Naive thymus-derived CD4-positive, alpha-beta T cell (primary cell): ENCODE measurements at regions of chr1 and their contacts with region 1.

Region 1: GRCh38 chr1:161192476-161193465 is 6.1 kb downstream of the ADAMTS4 start:
- DNase-seq: peak in 8 of 9 donors; percentile 53 to 80 (median 74)
- ATAC-seq: peak; percentile 95
- H3K4me3 ChIP-seq: no peak overlapping the region
- H3K4me3 Mint-ChIP-seq: peak overlapping the region in 5 of 10 donors; percentile 18 to 50 (median 29)
- H3K27ac ChIP-seq: no peak overlapping the region
- H3K27ac Mint-ChIP-seq: peak overlapping the region; percentile 51 to 93 (median 85)
- H3K4me1 ChIP-seq: peaks cover 34 to 53% of the 10 kb centered on the region in 2 donors
- H3K4me1 Mint-ChIP-seq: peaks cover 30 to 68% (median 42%) of the 10 kb centered on the region in 7 donors
- H3K27me3 ChIP-seq: no peaks in the 10 kb centered on the region
- H3K27me3 Mint-ChIP-seq: no peaks in the 10 kb centered on the region

Region 2: GRCh38 chr1:160483505-160484185 is 709.1 kb before region 1 on chr1:
- CTCF ChIA-PET with region 1: no interaction called
- POLR2A ChIA-PET with region 1: no interaction called
- intact Hi-C with region 1: no loop called
- DNase-seq: peak in 1 of 9 donors; percentile 13
- ATAC-seq: no peak
- H3K4me3 ChIP-seq: no peak overlapping the region
- H3K4me3 Mint-ChIP-seq: no peak overlapping the region
- H3K27ac ChIP-seq: no peak overlapping the region
- H3K27ac Mint-ChIP-seq: peak overlapping the region in 7 of 9 donors; percentile 15 to 68 (median 53)
- H3K4me1 ChIP-seq: peaks cover 10 to 18% of the 10 kb centered on the region in 2 donors
- H3K4me1 Mint-ChIP-seq: peaks cover 8 to 57% (median 48%) of the 10 kb centered on the region in 7 donors
- H3K27me3 ChIP-seq: no peaks in the 10 kb centered on the region
- H3K27me3 Mint-ChIP-seq: no peaks in the 10 kb centered on the region

Region 3: DNA sequence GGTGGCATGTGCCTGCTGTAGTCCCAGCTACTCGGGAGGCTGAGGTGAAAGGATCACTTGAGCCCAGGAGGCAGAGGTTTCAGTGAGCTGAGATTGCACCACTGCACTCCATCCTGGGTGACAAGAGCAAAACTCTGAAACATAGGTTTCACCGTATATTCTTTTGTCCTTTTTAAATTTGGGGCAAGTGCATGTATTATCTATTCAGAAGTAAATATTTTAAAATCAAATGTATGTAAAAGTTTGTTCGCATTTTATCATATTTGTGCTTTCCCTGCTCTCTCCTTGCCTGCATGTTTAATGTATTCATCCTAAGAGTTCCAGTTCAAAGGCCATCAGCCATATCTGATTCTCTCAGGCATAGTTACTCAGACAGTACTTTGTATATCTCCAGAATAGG is 46.9 kb before region 1 on chr1:
- CTCF ChIA-PET with region 1: no interaction called
- POLR2A ChIA-PET with region 1: no interaction called
- intact Hi-C with region 1: no loop called
- DNase-seq: no peak
- ATAC-seq: no peak
- H3K4me3 ChIP-seq: no peak overlapping the region
- H3K4me3 Mint-ChIP-seq: no peak overlapping the region
- H3K27ac ChIP-seq: no peak overlapping the region
- H3K27ac Mint-ChIP-seq: no peak overlapping the region
- H3K4me1 ChIP-seq: no peaks in the 10 kb centered on the region
- H3K4me1 Mint-ChIP-seq: no peaks in the 10 kb centered on the region
- H3K27me3 ChIP-seq: no peaks in the 10 kb centered on the region
- H3K27me3 Mint-ChIP-seq: no peaks in the 10 kb centered on the region

Region 4: DNA sequence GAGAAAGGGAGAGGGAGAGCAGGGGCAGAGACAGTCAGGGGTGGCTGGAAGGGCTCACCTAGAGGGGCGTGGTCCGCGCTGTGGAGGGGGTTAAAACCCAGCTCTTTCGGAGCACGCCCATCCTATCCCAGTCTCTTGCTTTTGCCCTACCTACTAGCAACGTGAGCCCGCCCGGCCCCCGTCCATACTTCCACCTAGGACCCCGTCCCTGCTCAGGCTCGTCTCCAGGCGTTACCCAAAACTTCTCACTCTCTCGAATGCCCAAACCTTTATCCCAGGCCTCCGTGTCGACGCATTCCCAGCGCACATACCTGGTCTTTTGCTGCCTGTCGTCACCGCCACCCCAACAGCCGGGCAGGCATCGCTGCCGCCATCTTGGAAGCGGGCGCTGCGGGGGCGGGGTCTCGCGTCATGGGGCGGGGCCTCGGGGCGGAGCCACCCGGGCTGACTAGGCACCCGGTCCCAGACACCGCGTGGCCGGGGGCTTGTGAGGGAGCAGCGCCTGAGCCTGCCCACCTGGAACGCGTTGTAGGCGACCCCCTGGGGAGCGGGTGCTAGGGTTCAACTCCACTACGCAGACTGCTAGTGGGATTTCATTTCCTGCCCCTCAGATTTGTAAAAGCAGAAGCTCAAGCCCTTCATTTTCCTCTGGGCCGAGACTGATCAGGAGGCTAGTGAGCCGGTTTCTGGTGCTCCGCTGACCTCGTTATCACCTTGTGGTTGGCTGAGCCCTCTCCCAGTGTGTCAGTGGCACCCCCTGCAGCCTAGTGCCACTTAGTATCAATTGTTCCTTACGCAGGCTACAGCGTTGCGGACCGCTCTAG is 15.4 kb before region 1 on chr1 and contains the start of gene B4GALT3:
- CTCF ChIA-PET with region 1: interaction called, 76 read pairs
- POLR2A ChIA-PET with region 1: interaction called, 93 read pairs
- intact Hi-C with region 1: loop called (anchors 1 kb)
- DNase-seq: peak; percentile 87 to 99 (median 92)
- ATAC-seq: peak; percentile 96
- H3K4me3 ChIP-seq: peak within 1 kb of the TSS; percentile 93
- H3K4me3 Mint-ChIP-seq: peak within 1 kb of the TSS; percentile 94 to 100 (median 98)
- H3K27ac ChIP-seq: peak within 1 kb of the TSS; percentile 93
- H3K27ac Mint-ChIP-seq: peak within 1 kb of the TSS; percentile 94 to 100 (median 97)
- H3K4me1 ChIP-seq: peaks cover 36 to 39% of the 10 kb centered on the region in 2 donors
- H3K4me1 Mint-ChIP-seq: peaks cover 54 to 87% (median 74%) of the 10 kb centered on the region in 7 donors
- H3K27me3 ChIP-seq: no peaks in the 10 kb centered on the region
- H3K27me3 Mint-ChIP-seq: no peaks in the 10 kb centered on the region
- total RNA-seq, gene B4GALT3: 40.5 to 83.7 (median 54.3) TPM

Region 5: DNA sequence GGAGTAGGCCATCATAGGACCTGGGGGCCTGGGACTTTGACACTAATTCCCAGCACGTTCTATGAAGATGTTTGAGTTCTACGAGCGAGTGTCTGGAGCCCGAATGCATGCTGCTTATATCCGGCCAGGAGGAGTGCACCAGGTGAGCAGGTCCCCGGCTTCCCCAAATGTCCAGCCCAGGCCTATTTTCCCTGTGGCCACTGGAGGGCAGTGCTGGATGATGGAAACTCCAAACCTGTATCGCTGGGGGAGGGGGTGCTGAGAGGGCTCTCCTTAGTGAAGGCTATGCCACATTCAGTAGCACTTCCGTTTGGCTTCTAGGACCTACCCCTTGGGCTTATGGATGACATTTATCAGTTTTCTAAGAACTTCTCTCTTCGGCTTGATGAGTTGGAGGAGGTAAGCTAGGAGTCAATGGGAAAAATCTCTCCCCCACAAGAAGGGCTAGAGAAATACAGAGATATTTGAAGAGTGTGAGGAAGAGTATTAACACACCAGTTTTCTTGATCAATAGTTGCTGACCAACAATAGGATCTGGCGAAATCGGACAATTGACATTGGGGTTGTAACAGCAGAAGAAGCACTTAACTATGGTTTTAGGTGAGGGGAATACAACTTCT is 17.1 kb after region 1 on chr1:
- CTCF ChIA-PET with region 1: interaction called, 21 read pairs
- POLR2A ChIA-PET with region 1: interaction called, 508 read pairs
- intact Hi-C with region 1: loop called in 1 of 2 experiments (anchors 1 kb)
- DNase-seq: peak; percentile 53 to 79 (median 73)
- ATAC-seq: peak; percentile 98
- H3K4me3 ChIP-seq: no peak overlapping the region
- H3K4me3 Mint-ChIP-seq: no peak overlapping the region
- H3K27ac ChIP-seq: peak overlapping the region; percentile 27
- H3K27ac Mint-ChIP-seq: peak overlapping the region in 8 of 9 donors; percentile 60 to 89 (median 66)
- H3K4me1 ChIP-seq: peaks cover 0 to 31% of the 10 kb centered on the region in 2 donors
- H3K4me1 Mint-ChIP-seq: peaks cover 12 to 49% (median 41%) of the 10 kb centered on the region in 7 donors
- H3K27me3 ChIP-seq: no peaks in the 10 kb centered on the region
- H3K27me3 Mint-ChIP-seq: no peaks in the 10 kb centered on the region

Region 6: DNA sequence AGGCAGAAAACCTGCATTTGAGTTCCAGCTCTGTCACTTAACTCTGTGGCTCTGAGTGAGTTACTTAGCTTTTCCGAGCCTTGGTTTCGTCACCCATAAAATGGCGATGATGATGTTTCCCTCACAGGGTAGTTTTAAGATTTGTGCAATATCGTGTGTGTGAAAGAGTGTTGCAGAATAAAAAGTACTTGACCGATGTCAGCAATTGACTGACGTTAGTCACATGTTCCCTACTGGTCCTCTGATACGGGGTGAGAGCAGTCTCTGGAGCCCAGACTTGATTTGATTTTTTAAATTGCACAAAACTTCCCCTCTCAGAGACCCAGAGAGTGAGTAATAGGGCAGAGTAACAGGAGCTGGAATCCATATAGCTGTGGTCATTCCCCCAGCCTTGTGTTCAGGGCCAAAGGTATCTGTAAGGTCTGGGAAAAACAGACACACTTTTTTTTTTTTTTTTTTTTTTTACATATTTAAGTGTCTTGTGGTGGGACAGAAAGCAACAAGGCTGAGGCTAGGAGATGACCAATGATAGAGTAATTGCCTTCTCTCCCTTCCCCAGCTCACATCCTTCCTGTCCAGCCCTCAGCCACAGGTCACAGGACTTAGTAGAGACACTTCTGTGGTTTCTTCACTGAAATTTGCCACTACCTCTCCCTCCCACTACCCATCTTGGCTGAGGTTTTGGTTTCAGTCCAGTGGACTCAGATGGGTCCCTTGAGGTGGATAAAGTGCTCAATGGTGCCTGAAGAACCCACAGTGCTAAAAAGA is 24.4 kb after region 1 on chr1:
- CTCF ChIA-PET with region 1: interaction called, 19 read pairs
- POLR2A ChIA-PET with region 1: interaction called, 508 read pairs
- intact Hi-C with region 1: no loop called
- DNase-seq: no peak
- ATAC-seq: peak; percentile 82
- H3K4me3 ChIP-seq: no peak overlapping the region
- H3K4me3 Mint-ChIP-seq: peak overlapping the region in 7 of 10 donors; percentile 8 to 73 (median 67)
- H3K27ac ChIP-seq: peak overlapping the region; percentile 52
- H3K27ac Mint-ChIP-seq: peak overlapping the region; percentile 51 to 99 (median 91)
- H3K4me1 ChIP-seq: peaks cover 0 to 45% of the 10 kb centered on the region in 2 donors
- H3K4me1 Mint-ChIP-seq: peaks cover 31 to 64% (median 54%) of the 10 kb centered on the region in 7 donors
- H3K27me3 ChIP-seq: no peaks in the 10 kb centered on the region
- H3K27me3 Mint-ChIP-seq: no peaks in the 10 kb centered on the region

Region 7: DNA sequence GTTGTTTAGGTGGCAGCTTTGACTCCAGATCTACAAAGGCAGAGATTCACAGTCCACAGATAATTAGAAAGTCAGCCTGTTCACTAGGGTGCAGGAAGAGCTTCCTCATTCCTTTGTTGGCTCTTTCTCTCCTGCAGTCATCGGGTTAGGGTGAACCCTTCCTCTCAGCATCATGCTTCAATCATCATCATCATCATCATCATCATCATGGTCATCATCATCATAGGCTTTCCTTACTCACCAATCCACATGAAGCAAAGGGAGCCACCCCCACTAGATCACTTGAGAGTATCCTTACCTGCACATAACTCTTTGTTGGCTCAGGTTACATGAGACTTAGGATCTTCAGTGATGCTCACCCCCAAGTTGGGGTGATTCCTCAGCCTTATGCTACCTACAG is 98.0 kb after region 1 on chr1:
- CTCF ChIA-PET with region 1: interaction called, 10 read pairs
- POLR2A ChIA-PET with region 1: interaction called, 4 read pairs
- intact Hi-C with region 1: loop called (anchors 1 kb)
- DNase-seq: no peak
- ATAC-seq: no peak
- H3K4me3 ChIP-seq: no peak overlapping the region
- H3K4me3 Mint-ChIP-seq: no peak overlapping the region
- H3K27ac ChIP-seq: no peak overlapping the region
- H3K27ac Mint-ChIP-seq: peak overlapping the region in 2 of 9 donors; percentile 28 to 61
- H3K4me1 ChIP-seq: no peaks in the 10 kb centered on the region
- H3K4me1 Mint-ChIP-seq: peaks cover 0 to 6% (median 0%) of the 10 kb centered on the region in 7 donors
- H3K27me3 ChIP-seq: no peaks in the 10 kb centered on the region
- H3K27me3 Mint-ChIP-seq: no peaks in the 10 kb centered on the region

Region 8: DNA sequence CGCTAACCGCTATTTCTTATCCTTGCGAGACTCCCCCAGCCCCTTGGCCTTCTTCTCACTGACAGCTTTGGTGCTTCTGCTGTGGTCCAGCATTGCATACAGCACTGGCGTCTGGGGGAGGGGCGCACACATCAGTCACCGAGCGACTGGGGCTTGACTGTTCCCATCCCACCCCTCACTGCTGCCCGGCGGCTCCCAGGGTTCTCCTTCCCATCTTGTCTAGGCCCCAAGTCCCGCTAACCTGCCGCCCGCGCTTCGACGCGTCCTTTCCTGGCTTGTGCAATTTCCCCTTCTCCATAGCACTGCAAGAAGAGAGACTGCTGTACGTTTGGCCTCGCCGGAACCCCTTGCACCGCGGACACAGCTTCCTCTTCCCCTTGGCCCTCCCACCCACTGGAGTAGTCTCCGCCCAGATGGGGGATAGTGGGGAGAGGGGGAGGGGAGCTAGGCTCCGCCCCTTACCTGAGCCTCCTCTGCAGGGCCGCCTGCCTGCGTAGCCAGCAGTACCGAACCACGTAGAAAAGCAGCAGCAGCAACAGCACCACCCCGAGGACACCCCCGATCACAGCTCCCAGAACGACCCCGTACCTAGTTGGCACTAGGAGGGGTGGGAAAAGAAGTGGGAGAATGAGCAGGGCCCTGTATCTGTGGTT is 113.2 kb after region 1 on chr1:
- CTCF ChIA-PET with region 1: interaction called, 3 read pairs
- POLR2A ChIA-PET with region 1: interaction called, 5 read pairs
- intact Hi-C with region 1: loop called in 1 of 2 experiments (anchors 1 kb)
- DNase-seq: peak; percentile 67 to 94 (median 92)
- ATAC-seq: peak; percentile 99
- H3K4me3 ChIP-seq: peak overlapping the region; percentile 86
- H3K4me3 Mint-ChIP-seq: peak overlapping the region; percentile 93 to 100 (median 98)
- H3K27ac ChIP-seq: peak overlapping the region; percentile 78
- H3K27ac Mint-ChIP-seq: peak overlapping the region; percentile 91 to 98 (median 95)
- H3K4me1 ChIP-seq: peaks cover 16 to 19% of the 10 kb centered on the region in 2 donors
- H3K4me1 Mint-ChIP-seq: peaks cover 27 to 47% (median 41%) of the 10 kb centered on the region in 7 donors
- H3K27me3 ChIP-seq: no peaks in the 10 kb centered on the region
- H3K27me3 Mint-ChIP-seq: peaks cover 0 to 5% (median 0%) of the 10 kb centered on the region in 5 donors

Region 9: DNA sequence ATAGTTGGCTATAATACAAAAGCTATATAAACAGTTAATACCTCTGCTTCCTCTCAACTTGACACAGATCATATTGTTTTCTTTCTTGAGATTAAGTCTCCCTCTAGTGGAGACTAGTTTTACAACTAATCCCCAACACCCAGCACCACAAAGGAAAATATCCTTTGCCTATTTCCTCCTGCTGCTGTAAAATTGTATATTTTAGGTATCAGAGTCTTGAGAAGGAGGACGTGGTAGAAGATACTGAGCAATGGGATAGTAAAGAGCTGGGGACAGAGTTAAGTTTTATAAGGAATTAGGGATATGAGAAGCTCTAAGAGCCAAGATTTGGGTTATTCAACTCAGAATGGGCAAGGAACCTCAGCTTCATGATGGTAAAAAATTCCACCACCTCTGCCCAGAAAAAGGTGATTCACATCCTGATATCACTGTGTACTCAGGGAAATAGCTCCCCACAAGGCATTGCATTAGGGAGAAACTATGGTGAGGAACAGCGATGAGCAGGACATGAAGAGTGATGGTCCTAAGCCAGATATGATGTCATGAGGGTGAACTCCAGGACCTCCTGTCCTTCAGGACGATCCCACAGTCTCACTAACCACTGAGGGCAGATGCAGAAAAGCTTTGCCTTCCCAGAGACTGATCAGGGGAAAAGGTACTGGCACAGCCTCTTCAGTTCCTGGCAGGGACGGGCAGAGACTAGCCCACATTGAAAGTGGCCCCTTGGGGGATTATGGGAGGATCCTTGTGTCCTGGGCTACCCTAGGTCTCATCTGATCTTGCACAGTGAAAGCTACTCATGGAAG is 189.6 kb after region 1 on chr1:
- CTCF ChIA-PET with region 1: interaction called, 17 read pairs
- POLR2A ChIA-PET with region 1: no interaction called
- intact Hi-C with region 1: loop called (anchors 1 kb)
- DNase-seq: peak in 6 of 9 donors; percentile 40 to 68 (median 59)
- ATAC-seq: peak; percentile 91
- H3K4me3 ChIP-seq: no peak overlapping the region
- H3K4me3 Mint-ChIP-seq: no peak overlapping the region
- H3K27ac ChIP-seq: no peak overlapping the region
- H3K27ac Mint-ChIP-seq: peak overlapping the region in 3 of 9 donors; percentile 53 to 76 (median 73)
- H3K4me1 ChIP-seq: peaks cover 0 to 3% of the 10 kb centered on the region in 2 donors
- H3K4me1 Mint-ChIP-seq: peaks cover 0 to 19% (median 13%) of the 10 kb centered on the region in 7 donors
- H3K27me3 ChIP-seq: no peaks in the 10 kb centered on the region
- H3K27me3 Mint-ChIP-seq: no peaks in the 10 kb centered on the region